ENCODE measurements at regions of chr12 and their contacts with region 1.

Region 1: GRCh38 chr12:51341259-51342007 is 5.0 kb downstream of the CELA1 start:
- DNase-seq: no peak
- ATAC-seq: peak; percentile 96
- H3K4me3 ChIP-seq: peak overlapping the region; percentile 19
- H3K27ac ChIP-seq: peak overlapping the region; percentile 37
- H3K4me1 ChIP-seq: peaks cover 5% of the 10 kb centered on the region
- H3K27me3 ChIP-seq: no peaks in the 10 kb centered on the region
- CTCF ChIP-seq: peak; percentile 98

Region 2: GRCh38 chr12:51270067-51270970 is 71.1 kb before region 1 on chr12 and contains the start of gene SMAGP:
- intact Hi-C with region 1: loop called (anchors 10 kb)
- DNase-seq: peak; percentile 94
- ATAC-seq: peak; percentile 89
- H3K4me3 ChIP-seq: peak within 1 kb of the TSS; percentile 71
- H3K27ac ChIP-seq: peak within 1 kb of the TSS; percentile 59
- H3K4me1 ChIP-seq: peaks cover 8% of the 10 kb centered on the region
- H3K27me3 ChIP-seq: peaks cover 5% of the 10 kb centered on the region
- CTCF ChIP-seq: no peak
- total RNA-seq, gene SMAGP: 34.2 TPM